Dendritic cell treated with granulocyte-macrophage colony-stimulating factor and Interleukin-4, amounts not matched to agents 40 ng/mL and 50 ng/mL, for 4 days (primary cell): ENCODE measurements at regions of chr19 and their contacts with region 1.

Region 1: DNA sequence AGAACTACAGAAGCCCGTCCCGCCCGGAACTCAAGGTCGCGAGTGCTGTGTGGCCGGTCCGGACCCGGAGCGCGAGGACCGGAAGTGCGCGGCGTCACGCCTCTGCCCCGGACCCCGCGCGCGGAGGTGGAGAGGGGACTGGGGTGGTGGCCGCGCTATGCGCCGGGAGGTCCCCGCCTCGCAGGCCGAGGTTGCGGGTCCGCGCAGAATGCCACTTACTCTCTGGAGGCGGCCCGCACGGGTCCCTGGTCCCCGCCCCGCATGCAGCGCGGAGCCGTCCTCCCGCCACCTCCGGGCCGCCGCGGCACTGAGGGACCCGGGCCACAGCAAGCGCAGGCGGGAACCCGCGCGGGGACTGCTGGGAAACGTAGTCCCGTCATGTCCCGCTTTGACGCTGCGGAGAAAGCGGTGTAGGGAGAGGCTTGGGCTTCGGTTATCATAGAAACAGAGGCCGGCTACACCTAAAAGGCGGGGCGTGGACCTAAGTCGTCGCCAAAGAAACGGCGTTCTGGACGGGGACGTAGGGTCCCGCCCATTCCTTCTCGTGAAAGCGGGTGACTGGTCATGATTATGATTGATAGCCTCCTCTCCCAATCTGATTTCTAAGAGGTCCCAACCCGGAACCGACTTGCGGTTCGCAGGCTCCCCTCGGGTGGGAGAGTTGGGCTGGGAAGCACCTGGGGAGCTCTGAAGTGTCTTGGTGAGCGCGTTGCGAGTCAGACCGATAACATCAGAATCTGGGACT is at the start of gene ZNF837:
- H3K4me3 Mint-ChIP-seq: peak within 1 kb of the TSS; percentile 78
- H3K27ac Mint-ChIP-seq: peak within 1 kb of the TSS; percentile 86
- H3K4me1 Mint-ChIP-seq: peaks cover 29% of the 10 kb centered on the region
- H3K27me3 Mint-ChIP-seq: no peaks in the 10 kb centered on the region

Region 2: GRCh38 chr19:58182989-58183816 is 197.7 kb before region 1 on chr19 and contains the start of gene ZNF274:
- intact Hi-C with region 1: loop called (anchors 2 kb)
- H3K4me3 Mint-ChIP-seq: peak within 1 kb of the TSS; percentile 93
- H3K27ac Mint-ChIP-seq: peak within 1 kb of the TSS; percentile 100
- H3K4me1 Mint-ChIP-seq: peaks cover 22% of the 10 kb centered on the region
- H3K27me3 Mint-ChIP-seq: no peaks in the 10 kb centered on the region

Region 3: DNA sequence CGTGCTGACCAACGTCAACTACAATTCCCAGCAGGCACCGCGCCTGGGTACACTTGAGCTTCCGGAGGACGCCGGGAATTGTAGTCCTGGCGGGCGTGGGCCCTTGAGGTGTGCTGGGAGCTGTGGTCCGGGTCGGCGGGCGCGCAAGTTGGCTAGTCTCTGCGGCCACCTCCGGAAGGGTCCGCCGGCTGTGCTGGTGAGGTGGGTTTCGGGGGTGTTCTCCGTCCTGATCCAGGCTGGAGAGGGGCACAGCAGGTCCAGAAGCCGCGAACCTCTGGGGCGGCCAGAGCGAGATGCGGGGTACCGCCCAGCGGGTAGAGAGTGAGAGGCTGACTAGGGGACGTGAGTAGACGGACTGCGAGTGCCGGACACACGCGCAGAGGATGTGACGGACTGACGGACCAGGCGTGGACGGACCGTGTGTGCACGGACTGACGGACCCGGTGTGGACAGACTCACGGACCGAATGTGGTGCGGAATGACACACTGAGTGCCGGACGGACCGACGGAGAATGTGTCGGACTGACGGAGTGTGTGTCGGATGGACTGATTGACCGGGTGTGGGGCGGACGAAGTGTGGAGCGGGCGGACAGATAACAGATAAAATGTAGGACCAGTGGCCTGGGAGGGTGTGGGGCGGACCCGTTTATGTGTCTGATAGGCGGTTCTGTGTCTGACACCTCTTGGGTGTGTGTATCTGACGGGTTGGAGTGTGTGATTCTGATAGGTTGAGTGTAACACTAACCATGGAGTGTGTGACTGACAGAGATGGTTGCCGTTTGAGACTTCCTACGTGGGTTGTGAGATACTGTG is 53.8 kb before region 1 on chr19 and contains the start of gene ZSCAN22:
- intact Hi-C with region 1: loop called (anchors 1 kb)
- H3K4me3 Mint-ChIP-seq: no peak within 1 kb of the TSS
- H3K27ac Mint-ChIP-seq: no peak within 1 kb of the TSS
- H3K4me1 Mint-ChIP-seq: peaks cover 8% of the 10 kb centered on the region
- H3K27me3 Mint-ChIP-seq: no peaks in the 10 kb centered on the region

Region 4: DNA sequence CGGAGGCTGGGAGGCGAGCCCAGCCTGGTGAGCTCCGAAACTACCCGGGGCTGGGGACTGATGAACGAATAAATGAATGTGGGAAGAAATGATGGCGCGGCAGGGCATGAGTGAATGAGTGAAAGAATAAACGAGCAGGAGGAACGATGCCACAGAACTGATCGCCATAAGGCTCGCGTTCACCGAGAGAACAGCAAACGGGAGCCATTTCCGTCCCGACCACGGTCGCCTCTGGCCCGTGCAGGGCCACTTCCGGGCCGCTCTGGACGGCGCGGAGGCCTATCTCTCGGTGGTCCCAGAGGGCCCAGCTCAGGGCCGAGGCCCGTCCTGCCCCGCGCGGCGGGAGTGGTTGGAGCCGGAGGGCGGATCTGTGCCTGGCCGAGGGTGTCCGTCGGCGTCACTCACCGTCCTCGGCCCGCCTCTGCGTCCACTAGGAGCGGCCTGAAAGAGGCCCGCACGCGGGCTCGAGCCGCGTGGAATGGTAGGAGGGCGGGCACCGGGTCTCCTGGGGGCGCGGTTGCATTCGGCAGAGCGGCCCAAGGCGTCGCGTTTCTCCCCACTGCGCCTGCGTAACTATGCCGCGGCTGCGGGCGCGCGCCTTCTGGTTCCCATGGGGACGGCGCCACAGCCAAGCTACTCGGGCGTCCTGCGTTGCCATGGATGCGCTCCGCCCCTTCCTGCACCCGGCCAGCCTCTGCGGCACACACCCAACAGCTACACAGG is 18.5 kb before region 1 on chr19 and contains the start of gene ZNF497:
- intact Hi-C with region 1: loop called (anchors 2 kb)
- H3K4me3 Mint-ChIP-seq: peak within 1 kb of the TSS; percentile 96
- H3K27ac Mint-ChIP-seq: peak within 1 kb of the TSS; percentile 98
- H3K4me1 Mint-ChIP-seq: peaks cover 24% of the 10 kb centered on the region
- H3K27me3 Mint-ChIP-seq: peaks cover 12% of the 10 kb centered on the region

Region 5: DNA sequence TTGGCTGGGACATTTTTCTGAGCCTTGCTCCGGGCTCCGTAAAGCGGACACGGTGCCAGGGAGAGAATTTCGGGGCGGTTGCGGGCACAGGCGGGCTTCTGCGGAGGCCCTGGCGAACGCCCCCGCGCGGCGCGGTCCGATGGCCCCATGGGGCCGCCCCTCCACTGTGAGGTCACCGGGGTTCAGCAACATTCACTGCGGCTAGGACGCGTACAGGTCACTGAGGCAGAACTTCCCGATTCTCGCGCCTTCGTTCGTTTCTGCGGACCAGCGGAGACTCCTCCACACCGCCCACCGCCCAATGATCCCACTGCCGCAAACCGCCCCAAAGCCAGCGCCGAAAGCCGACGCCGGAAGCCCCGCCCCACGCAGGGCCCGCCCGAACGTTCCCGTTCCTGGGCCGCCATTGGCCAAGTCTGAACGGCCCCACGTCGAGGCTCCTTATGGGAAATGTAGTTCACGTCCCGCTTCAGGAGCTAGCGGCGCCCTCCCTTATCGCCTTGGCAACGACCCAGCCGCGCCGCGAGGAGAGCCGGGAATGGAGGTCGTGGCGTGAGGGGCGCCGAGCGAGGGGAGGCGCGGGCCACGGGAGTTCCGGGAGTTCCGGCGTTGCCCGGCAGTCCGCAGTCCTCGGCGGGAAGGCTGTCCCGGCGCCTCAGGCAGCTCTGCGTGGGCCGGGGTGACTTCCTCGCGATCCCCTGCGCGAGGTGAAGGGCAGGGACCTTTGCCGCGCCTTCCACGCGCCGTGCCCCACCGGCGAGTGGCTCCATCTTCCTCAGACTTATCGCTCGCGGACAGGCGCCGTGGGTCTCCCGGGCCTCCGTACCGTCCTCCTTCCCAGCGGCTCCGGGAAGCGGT is 27.5 kb after region 1 on chr19 and contains the start of gene ZNF584:
- intact Hi-C with region 1: loop called (anchors 1 kb)
- H3K4me3 Mint-ChIP-seq: peak within 1 kb of the TSS; percentile 96
- H3K27ac Mint-ChIP-seq: peak within 1 kb of the TSS; percentile 88
- H3K4me1 Mint-ChIP-seq: peaks cover 40% of the 10 kb centered on the region
- H3K27me3 Mint-ChIP-seq: no peaks in the 10 kb centered on the region

Region 6: DNA sequence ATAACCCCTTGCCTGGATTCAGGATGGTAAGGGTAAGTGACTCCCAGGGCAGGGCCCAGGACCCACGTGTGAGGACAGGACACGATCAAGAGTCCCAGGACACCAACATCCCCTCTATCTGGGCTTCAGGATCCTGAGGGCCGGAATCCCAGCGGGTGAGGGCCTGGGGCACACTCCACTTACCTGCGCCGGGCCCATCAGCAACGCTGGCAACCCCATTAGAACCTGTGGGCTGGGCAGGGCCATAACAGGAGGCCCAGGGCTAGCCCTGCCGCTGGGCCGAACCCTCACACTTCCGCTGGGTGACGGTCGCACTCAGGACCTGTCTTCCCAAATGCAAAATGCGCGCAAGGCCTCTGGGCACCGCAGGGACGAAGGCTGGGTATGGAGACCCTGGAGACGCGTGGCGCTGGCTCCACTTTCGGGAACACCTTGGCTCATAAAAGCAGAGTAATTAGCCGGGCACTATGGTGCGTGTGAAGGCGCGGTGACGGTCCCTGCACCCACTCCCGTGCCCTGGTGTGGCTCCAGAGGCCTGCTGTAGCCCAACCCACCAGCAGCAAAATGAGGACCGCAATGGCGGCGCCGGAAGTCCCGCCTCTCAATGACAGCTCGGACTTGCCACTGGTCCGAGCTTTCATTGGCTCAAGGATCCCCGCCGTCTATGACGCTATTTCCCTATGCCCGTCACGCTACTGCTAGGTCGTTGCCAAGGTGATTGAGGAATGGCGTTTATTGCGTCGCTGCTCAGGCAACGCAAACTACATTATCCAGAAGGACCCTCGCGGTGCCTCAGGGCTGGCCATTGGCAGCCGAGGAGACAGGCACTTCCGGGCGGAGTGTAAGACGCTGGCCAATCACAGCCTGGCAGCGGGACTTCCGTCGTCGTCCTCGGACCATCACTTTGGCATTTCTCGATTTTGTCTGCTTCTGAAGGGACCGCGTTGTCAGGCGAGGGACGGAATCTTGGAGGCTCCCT is 59.0 kb after region 1 on chr19 and contains the start of gene ZNF132:
- intact Hi-C with region 1: loop called (anchors 2 kb)
- H3K4me3 Mint-ChIP-seq: peak within 1 kb of the TSS; percentile 88
- H3K27ac Mint-ChIP-seq: peak within 1 kb of the TSS; percentile 89
- H3K4me1 Mint-ChIP-seq: peaks cover 20% of the 10 kb centered on the region
- H3K27me3 Mint-ChIP-seq: peaks cover 15% of the 10 kb centered on the region